Dendritic cell treated with granulocyte-macrophage colony-stimulating factor and Interleukin-4, amounts not matched to agents 40 ng/mL and 50 ng/mL, for 4 days (primary cell): ENCODE measurements at regions of chr6 and their contacts with region 1.

Region 1: DNA sequence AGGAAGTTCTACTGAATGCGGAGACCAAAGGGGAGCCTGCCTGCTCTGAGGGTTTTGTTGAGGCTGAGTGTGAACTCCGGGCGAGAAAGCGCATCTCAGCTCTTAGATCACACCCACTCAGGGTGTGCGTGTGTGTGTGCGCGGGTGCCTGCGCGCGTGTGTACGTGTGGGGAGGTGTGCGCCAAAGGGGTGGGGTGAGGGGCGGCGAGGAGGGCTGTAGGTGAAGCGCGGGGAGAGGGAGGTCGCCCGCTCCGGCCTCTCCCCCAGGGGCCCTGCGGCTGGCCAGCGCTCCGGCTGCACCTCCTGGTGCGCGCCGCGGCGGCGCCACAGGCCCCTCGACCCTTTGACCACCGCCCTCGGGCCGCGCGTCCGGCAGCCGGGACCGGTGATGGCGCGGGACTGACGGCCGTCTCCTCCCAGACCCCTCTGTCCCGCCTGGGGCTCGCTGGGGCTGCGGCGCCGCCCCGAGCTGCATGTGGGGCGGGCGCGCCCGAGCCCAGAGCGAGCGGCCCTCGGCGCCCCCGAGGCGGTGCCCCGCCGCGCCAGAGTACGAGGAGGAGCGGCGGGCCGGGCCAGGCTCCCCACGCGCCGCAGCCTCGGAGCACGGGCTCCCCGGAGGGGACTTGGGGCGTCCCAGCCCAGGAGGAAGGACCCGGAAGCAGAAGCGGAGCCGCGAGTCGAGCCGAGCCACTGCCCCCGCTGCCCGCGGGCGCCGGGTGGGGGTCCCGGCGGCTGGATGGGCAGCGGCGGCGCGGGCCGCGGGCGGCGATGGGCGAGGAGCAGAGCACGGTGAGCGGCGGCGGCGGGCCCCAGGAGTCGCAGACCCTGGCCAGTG is at the start of gene RNF217:
- H3K4me3 Mint-ChIP-seq: peak within 1 kb of the TSS; percentile 93
- H3K27ac Mint-ChIP-seq: peak within 1 kb of the TSS; percentile 95
- H3K4me1 Mint-ChIP-seq: peaks cover 65% of the 10 kb centered on the region
- H3K27me3 Mint-ChIP-seq: no peaks in the 10 kb centered on the region

Region 2: GRCh38 chr6:125099211-125100073 is 137.4 kb after region 1 on chr6:
- intact Hi-C with region 1: loop called (anchors 10 kb)
- H3K4me3 Mint-ChIP-seq: peak overlapping the region; percentile 81
- H3K27ac Mint-ChIP-seq: peak overlapping the region; percentile 8
- H3K4me1 Mint-ChIP-seq: peaks cover 15% of the 10 kb centered on the region
- H3K27me3 Mint-ChIP-seq: peaks cover 12% of the 10 kb centered on the region